Transverse colon (tissue), 4 donors: ENCODE measurements at regions of chr6 and their contacts with region 1.

Region 1: DNA sequence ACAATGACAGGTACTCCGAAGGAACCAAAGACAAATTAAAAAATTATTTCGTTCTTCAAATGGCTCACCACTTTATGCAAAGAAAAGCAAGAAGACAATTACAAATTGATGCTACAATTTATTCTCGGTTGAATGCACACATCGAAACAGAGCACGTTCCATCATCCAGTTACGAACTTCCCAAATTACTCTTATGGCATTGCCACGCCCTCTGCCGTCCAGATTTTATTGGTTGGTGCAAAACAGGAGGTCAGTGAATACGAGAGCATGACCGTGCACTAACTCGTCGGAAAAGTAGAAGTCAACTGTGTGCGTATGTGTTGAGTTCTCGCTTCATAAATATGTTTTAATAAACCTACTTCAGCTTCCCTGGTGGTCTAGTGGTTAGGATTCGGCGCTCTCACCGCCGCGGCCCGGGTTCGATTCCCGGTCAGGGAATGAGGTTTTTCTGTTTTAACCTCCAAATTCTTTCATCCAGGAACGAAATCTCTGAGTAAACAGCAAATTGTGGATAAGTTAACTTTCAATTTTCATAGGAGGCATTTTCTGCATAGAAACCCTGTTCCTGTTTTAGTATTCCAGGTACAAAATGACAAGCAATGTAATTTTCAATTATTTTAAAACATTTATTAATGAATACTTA is 23.2 kb downstream of the ZNF311 start:
- DNase-seq: peak; percentile 83
- H3K4me3 ChIP-seq: peak overlapping the region; percentile 28 to 81 (median 46)
- H3K27ac ChIP-seq: peak overlapping the region; percentile 79 to 84 (median 80)
- H3K4me1 ChIP-seq: peaks cover 0 to 29% (median 13%) of the 10 kb centered on the region in 4 donors
- H3K27me3 ChIP-seq: peaks cover 8% of the 10 kb centered on the region
- CTCF ChIP-seq: peak in 1 of 5 experiments; percentile 1
- EP300 ChIP-seq: no peak
- POLR2A ChIP-seq: no peak

Region 2: GRCh38 chr6:27188885-27189418 is 1793.0 kb before region 1 on chr6:
- in situ Hi-C with region 1: no loop called
- intact Hi-C with region 1: loop called (anchors 10 kb)
- DNase-seq: peak; percentile 74
- H3K4me3 ChIP-seq: peak overlapping the region; percentile 41 to 68 (median 59)
- H3K27ac ChIP-seq: peak overlapping the region; percentile 86 to 91 (median 88)
- H3K4me1 ChIP-seq: peaks cover 0 to 7% (median 4%) of the 10 kb centered on the region in 4 donors
- H3K27me3 ChIP-seq: no peaks in the 10 kb centered on the region
- CTCF ChIP-seq: peak; percentile 74 to 85 (median 78)
- EP300 ChIP-seq: no peak
- POLR2A ChIP-seq: no peak

Region 3: DNA sequence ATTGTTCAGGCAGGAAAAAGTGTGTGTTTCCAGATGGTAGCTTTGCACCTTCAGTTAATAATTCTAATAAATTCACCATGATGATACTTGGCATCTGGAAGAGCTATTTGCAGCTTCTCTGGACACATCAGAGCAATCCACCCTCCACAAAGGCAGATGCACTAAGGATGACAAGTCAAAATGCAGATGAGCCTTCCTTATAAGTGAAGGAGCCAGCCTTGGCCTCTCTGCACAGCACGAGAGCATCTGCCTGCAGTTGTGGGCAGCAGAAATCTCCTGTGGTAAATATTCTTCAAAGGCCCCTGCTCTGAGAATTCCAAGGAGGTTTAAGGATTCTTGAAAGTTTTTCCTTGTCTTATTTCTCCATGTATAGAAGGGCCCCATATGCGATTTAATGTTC is 1663.0 kb before region 1 on chr6:
- in situ Hi-C with region 1: no loop called
- intact Hi-C with region 1: no loop called
- DNase-seq: no peak
- H3K4me3 ChIP-seq: no peak overlapping the region
- H3K27ac ChIP-seq: no peak overlapping the region
- H3K4me1 ChIP-seq: no peaks in the 10 kb centered on the region
- H3K27me3 ChIP-seq: peaks cover 48% of the 10 kb centered on the region
- CTCF ChIP-seq: no peak
- EP300 ChIP-seq: no peak
- POLR2A ChIP-seq: no peak

Region 4: GRCh38 chr6:28863604-28864320 is 118.2 kb before region 1 on chr6:
- in situ Hi-C with region 1: loop called in 1 of 4 experiments (anchors 10 kb)
- intact Hi-C with region 1: no loop called
- DNase-seq: peak; percentile 79
- H3K4me3 ChIP-seq: peak overlapping the region; percentile 54 to 61 (median 60)
- H3K27ac ChIP-seq: peak overlapping the region; percentile 68 to 84 (median 77)
- H3K4me1 ChIP-seq: peaks cover 0 to 17% (median 11%) of the 10 kb centered on the region in 4 donors
- H3K27me3 ChIP-seq: peaks cover 9% of the 10 kb centered on the region
- CTCF ChIP-seq: peak in 1 of 5 experiments; percentile 1
- EP300 ChIP-seq: no peak
- POLR2A ChIP-seq: no peak

Region 5: DNA sequence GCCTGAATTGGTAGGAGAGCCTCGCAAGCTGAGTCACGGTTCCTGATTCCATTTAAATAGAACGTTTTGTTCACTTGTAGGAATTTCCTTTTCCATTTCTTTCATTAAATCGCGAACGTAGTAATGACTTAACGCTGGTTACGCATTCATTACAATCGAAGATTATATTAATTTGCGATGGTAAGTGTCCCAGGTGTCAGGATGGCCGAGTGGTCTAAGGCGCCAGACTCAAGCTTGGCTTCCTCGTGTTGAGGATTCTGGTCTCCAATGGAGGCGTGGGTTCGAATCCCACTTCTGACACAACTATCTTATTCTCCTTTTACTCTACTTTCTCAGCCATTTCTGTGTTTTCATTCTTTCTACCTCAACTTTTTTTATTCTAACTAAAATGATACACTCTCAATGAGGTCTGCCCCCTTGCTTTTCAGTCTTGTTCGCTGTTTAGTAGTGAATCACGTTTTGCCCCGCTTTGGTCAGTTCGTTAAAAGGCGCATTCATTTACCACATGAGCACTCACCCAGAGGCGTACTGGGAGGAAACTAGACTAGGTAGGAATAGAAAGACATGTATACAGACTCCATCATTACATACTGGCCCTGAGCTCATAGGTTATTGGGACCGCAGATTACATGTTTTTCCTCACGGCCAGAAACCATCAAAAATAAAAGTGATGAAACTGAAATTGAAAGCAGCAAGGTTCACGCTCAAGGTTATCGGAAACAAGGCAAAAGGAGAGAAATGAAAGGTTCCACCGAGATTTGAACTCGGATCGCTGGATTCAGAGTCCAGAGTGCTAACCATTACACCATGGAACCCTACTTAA is 40.9 kb before region 1 on chr6:
- in situ Hi-C with region 1: loop called in 1 of 4 experiments (anchors 5 kb)
- intact Hi-C with region 1: loop called (anchors 5 kb)
- DNase-seq: peak; percentile 78
- H3K4me3 ChIP-seq: peak overlapping the region; percentile 36 to 65 (median 44)
- H3K27ac ChIP-seq: peak overlapping the region; percentile 67 to 86 (median 83)
- H3K4me1 ChIP-seq: peaks cover 7 to 38% (median 29%) of the 10 kb centered on the region in 4 donors
- H3K27me3 ChIP-seq: no peaks in the 10 kb centered on the region
- CTCF ChIP-seq: no peak
- EP300 ChIP-seq: no peak
- POLR2A ChIP-seq: no peak

Region 6: DNA sequence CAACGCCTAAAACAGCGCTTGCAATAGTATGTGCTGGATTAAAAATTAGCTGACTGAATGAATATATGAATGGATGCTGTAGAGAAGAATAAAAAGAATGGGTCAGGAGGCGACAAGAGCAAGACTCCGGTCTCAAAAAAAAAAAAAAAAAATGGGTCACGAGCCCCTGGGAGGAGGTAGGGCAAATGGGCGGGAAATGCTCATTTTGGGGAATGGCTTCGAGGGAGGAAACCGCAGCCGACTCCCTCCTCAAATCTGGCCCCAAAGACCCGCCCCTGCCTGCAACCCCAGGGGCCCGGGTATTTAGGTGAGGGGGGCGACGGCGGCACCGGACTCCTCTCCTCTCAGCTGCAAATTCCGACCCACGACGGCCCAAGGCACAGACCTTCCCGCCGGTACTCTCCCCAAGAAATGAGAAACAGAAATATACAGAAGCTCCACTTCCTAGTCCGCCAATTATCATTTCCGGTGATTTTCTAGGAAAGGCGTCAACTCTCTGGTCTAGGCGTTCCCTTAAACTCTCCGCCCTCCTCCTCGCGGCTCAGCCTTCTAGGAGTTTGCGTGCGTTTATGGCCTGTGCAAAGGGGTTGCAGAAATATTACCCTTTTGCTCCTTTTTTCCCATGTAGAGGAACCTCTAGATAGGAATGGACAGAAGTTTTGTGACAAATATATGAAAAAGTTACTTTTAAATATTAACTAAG is 23.4 kb after region 1 on chr6 and contains the start of gene ZNF311:
- in situ Hi-C with region 1: no loop called
- intact Hi-C with region 1: no loop called
- DNase-seq: peak; percentile 60
- H3K4me3 ChIP-seq: peak within 1 kb of the TSS; percentile 50 to 73 (median 52)
- H3K27ac ChIP-seq: peak within 1 kb of the TSS; percentile 73 to 81 (median 77)
- H3K4me1 ChIP-seq: peaks cover 0 to 9% (median 2%) of the 10 kb centered on the region in 4 donors
- H3K27me3 ChIP-seq: peaks cover 6% of the 10 kb centered on the region
- CTCF ChIP-seq: no peak
- EP300 ChIP-seq: no peak
- POLR2A ChIP-seq: peak; percentile 11
- total RNA-seq, gene ZNF311: 1.1 to 1.9 TPM in 2 of 4 donors, not detected in the others